Heart right ventricle (tissue), 16 donors: ENCODE measurements at regions of chr9 and their contacts with region 1.

Region 1: DNA sequence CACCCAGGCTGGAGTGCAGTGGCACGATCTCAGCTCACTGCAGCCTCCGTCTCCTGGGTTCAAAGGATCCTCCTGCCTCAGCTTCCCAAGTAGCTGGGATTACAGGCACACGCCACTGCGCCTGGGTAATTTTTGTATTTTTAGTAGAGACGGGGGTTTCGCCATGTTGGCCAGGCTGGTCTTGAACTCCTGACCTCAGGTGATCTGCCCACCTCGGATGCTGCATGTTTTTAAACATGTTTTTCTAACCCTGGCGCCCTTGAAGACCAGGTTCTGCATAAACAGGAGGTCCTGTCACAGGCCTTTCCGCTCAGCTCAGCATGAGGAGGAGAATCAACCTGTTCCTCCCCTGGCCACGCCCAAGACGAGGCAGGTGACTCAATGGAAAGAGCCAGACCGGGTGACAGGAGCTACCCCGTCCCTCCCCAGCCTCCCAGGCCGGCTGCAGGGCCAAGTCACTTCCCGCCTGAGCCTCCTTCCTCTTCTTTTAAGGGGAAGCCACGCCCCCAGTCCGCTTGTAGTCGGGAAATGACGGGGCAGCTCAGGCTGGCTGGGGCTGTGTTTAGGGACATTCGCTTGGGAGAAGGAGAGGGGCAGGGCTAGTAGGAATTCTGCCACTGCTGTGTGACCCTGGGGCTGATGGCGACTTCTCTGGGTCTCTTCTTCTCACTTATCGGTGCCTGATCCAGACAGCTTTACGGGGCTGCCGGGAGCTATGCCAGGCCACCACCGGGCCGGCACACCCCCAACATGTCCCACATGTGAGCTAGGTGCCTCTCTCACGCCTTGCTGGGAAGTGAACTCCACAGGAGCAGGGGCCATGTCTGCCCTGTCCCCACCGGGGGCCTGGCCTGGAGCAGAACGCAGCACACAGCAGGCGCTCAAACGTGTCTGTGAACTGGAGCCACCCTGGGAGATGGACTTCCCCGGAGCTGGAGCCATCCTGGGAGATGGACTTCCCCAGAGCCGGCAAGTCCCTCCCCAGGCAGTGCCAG is 6.1 kb downstream of the NOTCH1 start:
- DNase-seq: peak; percentile 89 to 97
- ATAC-seq: peak; percentile 74 to 92 (median 84)
- H3K4me3 ChIP-seq: peak overlapping the region in 8 of 10 donors; percentile 9 to 96 (median 46)
- H3K27ac ChIP-seq: peak overlapping the region; percentile 76 to 100 (median 90)
- H3K4me1 ChIP-seq: peaks cover 38 to 94% (median 87%) of the 10 kb centered on the region in 9 donors
- H3K27me3 ChIP-seq: no peaks in the 10 kb centered on the region
- CTCF ChIP-seq: no peak

Region 2: DNA sequence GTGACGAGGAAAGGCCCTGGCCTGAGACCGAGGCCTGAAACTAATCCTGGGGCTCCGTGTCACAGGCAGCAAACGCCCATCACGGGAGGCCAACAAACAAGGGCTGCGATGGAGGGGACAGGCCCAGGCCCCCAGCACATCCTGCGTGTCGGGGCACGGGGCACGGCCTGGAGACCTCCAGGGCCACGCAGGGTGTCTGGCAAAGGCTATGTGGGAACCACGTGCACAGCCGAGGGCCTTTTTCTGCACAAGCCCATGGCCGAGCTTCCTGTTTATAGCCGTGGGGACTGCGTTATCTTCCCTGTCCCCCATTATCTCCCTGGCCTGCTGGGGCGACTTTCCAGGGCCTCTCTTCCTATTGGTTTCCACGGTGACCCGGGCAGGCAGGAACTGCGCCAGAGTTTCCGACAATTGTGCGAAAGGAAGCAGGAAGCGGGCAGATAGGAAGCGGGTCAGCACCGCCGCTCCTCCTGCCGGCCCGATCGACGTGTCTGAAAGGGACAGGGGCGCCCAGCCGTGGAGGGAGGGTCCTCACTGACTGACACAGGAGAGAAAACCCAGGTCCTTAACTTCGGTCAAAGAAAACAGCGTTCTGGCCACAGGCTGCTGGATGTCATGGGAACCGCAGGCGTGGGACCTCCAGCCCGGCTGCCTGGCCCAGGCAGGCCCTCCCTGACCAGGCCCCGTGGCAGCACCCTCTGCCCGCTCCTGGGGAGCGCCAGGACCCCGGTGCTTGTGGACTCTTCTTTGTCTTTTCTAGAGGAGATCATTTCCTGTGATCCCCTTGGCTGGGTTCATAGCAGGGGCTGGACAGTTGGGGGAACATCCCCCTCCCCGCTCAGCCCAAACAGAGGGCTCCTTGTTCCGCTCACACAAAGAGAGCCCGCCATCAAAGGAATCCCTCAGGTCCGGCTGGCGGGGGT is 27.8 kb before region 1 on chr9:
- intact Hi-C with region 1: loop called in 2 of 10 experiments (anchors 2 to 5 kb)
- DNase-seq: peak; percentile 85 to 95
- ATAC-seq: peak; percentile 60 to 86 (median 80)
- H3K4me3 ChIP-seq: peak overlapping the region in 8 of 10 donors; percentile 12 to 46 (median 30)
- H3K27ac ChIP-seq: peak overlapping the region; percentile 80 to 98 (median 95)
- H3K4me1 ChIP-seq: peaks cover 13 to 56% (median 35%) of the 10 kb centered on the region in 9 donors
- H3K27me3 ChIP-seq: no peaks in the 10 kb centered on the region
- CTCF ChIP-seq: peak in 1 of 9 donors; percentile 13

Region 3: GRCh38 chr9:136602193-136602885 is 62.6 kb after region 1 on chr9:
- intact Hi-C with region 1: no loop called
- DNase-seq: no peak
- ATAC-seq: no peak
- H3K4me3 ChIP-seq: no peak overlapping the region
- H3K27ac ChIP-seq: peak overlapping the region in 2 of 10 donors; percentile 74 to 83
- H3K4me1 ChIP-seq: peaks cover 6 to 64% (median 40%) of the 10 kb centered on the region in 9 donors
- H3K27me3 ChIP-seq: peaks cover 0 to 12% (median 0%) of the 10 kb centered on the region in 7 donors
- CTCF ChIP-seq: no peak

Region 4: DNA sequence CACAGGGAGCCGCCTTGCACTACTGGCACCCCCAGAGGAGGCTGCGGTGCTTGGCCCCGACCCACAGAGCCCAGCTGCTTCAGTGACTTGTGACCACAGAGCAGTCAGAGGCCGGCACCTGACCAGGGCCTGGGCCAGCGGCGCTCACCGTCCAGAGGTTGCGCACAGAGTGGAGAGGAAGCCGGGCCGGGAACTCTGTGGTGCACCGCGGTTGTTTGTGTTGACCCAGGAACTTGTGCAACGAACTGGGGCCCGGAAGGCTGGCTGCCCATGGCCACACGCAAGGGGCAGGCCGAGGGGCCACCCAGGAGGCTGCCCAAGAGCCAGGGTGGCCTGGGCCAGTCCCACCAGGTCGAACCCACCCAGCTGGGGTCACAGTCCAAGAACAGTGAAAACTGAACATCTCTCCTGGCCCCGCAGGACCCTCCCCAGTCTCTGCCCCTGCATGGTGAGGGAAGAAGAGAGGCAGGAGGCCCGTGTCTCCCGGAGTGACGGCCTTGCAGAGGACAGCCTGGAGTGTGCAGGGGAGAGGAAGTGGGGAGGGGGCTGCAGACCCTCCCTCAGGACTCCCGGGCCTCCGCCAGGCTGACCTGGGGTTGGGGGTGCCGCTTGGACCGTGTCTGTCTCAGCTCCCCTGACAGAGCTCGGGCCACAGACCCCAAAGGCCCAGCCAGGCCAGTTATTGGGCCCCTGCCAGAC is 80.2 kb after region 1 on chr9:
- intact Hi-C with region 1: loop called in 4 of 10 experiments (anchors 5 to 10 kb)
- DNase-seq: peak in 1 of 2 donors; percentile 54
- ATAC-seq: peak; percentile 13 to 24 (median 14)
- H3K4me3 ChIP-seq: no peak overlapping the region
- H3K27ac ChIP-seq: peak overlapping the region in 4 of 10 donors; percentile 26 to 90 (median 51)
- H3K4me1 ChIP-seq: peaks cover 8 to 77% (median 30%) of the 10 kb centered on the region in 9 donors
- H3K27me3 ChIP-seq: no peaks in the 10 kb centered on the region
- CTCF ChIP-seq: no peak